PC-9 (cell line): ENCODE measurements at regions of chr1 and their contacts with region 1.

Region 1: GRCh38 chr1:67748630-67749029 is 63.6 kb downstream of the GADD45A start:
- DNase-seq: peak in 1 of 2 experiments; percentile 57
- H3K4me3 ChIP-seq: peak overlapping the region; percentile 42; the same call in 1 of the 2 replicates
- H3K27ac ChIP-seq: peak overlapping the region; percentile 91
- H3K4me1 ChIP-seq: peaks cover 58% of the 10 kb centered on the region
- H3K27me3 ChIP-seq: no peaks in the 10 kb centered on the region
- CTCF ChIP-seq: no peak

Region 2: DNA sequence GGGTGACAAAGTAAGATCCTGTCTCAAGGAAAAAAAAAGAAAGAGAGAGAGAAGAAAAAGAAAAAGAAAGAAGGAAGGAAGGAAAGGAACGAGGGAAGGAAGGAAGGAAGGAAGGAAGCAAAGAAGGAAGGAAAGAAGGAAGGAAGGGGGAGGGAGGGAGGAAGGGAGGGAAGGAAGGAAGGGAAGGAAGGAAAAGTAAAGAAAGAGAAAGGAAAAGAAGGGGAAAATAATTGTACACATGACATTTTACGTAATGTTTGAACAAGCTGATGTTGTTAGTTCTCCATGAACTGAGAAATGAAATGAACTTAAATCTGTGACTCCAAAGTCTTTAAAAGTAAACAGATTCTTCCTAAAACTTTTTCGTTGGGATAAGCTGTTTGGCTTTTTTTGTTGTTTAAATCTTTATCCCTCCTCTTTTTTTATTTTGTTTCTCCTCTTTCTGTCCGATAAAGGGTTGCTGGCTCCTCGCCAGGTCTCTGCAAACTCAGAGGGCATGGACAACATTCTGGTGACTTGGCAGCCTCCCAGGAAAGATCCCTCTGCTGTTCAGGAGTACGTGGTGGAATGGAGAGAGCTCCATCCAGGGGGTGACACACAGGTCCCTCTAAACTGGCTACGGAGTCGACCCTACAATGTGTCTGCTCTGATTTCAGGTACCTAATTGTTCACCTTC is 381.1 kb before region 1 on chr1:
- CTCF ChIA-PET with region 1: no interaction called
- POLR2A ChIA-PET with region 1: no interaction called
- intact Hi-C with region 1: loop called (anchors 10 kb)
- DNase-seq: peak in 1 of 2 experiments; percentile 39
- H3K4me3 ChIP-seq: no peak overlapping the region
- H3K27ac ChIP-seq: no peak overlapping the region
- H3K4me1 ChIP-seq: peaks cover 13% of the 10 kb centered on the region
- H3K27me3 ChIP-seq: no peaks in the 10 kb centered on the region
- CTCF ChIP-seq: no peak

Region 3: DNA sequence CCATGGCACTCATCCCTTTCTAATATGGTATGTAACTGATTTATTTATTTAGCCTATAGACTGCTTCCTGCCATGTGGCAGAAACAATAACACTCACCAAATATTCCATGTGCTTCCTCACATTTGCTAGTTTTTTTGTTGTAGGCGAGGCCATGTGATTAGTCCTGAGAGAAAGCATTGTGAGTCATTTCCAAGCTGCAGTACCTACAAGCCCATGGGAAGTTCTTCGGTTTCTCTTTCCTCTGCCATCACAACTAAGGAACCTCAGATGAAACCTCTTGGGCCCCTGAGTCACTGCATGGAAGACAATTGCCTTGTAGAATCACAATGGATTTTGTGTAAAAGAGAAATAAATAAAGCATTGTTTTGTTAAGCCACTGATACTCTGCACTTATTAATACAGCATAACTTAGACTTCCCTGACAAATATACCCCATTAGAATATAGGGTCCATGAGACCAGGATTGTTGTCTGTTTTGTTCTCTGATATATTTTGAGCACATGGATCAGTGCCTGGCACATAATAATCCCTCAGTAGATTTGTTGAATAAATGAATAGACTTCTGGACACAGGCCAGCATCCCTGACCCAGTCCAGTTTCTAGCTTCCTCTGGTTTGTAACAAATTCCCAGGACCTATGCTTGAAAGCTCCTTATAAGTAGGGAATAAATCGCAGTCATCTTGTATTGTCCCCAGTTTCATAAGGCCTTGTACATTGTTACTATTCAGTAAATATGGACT is 122.0 kb before region 1 on chr1:
- CTCF ChIA-PET with region 1: no interaction called
- POLR2A ChIA-PET with region 1: no interaction called
- intact Hi-C with region 1: no loop called
- DNase-seq: peak; percentile 22 to 93
- H3K4me3 ChIP-seq: no peak overlapping the region
- H3K27ac ChIP-seq: peak overlapping the region; percentile 87
- H3K4me1 ChIP-seq: peaks cover 40% of the 10 kb centered on the region
- H3K27me3 ChIP-seq: no peaks in the 10 kb centered on the region
- CTCF ChIP-seq: no peak

Region 4: GRCh38 chr1:67700692-67701410 is 47.8 kb before region 1 on chr1:
- CTCF ChIA-PET with region 1: interaction called, 7 read pairs
- POLR2A ChIA-PET with region 1: interaction called, 7 read pairs
- intact Hi-C with region 1: loop called (anchors 2 kb)
- DNase-seq: peak; percentile 84 to 93
- H3K4me3 ChIP-seq: no peak overlapping the region
- H3K27ac ChIP-seq: peak overlapping the region; percentile 63
- H3K4me1 ChIP-seq: peaks cover 18% of the 10 kb centered on the region
- H3K27me3 ChIP-seq: no peaks in the 10 kb centered on the region
- CTCF ChIP-seq: peak; percentile 55; the same call in 1 of the 2 replicates

Region 5: GRCh38 chr1:67713057-67713846 is 35.4 kb before region 1 on chr1:
- CTCF ChIA-PET with region 1: no interaction called
- POLR2A ChIA-PET with region 1: no interaction called
- intact Hi-C with region 1: loop called (anchors 2 kb)
- DNase-seq: peak; percentile 70 to 92
- H3K4me3 ChIP-seq: no peak overlapping the region
- H3K27ac ChIP-seq: peak overlapping the region; percentile 70
- H3K4me1 ChIP-seq: peaks cover 44% of the 10 kb centered on the region
- H3K27me3 ChIP-seq: no peaks in the 10 kb centered on the region
- CTCF ChIP-seq: no peak

Region 6: DNA sequence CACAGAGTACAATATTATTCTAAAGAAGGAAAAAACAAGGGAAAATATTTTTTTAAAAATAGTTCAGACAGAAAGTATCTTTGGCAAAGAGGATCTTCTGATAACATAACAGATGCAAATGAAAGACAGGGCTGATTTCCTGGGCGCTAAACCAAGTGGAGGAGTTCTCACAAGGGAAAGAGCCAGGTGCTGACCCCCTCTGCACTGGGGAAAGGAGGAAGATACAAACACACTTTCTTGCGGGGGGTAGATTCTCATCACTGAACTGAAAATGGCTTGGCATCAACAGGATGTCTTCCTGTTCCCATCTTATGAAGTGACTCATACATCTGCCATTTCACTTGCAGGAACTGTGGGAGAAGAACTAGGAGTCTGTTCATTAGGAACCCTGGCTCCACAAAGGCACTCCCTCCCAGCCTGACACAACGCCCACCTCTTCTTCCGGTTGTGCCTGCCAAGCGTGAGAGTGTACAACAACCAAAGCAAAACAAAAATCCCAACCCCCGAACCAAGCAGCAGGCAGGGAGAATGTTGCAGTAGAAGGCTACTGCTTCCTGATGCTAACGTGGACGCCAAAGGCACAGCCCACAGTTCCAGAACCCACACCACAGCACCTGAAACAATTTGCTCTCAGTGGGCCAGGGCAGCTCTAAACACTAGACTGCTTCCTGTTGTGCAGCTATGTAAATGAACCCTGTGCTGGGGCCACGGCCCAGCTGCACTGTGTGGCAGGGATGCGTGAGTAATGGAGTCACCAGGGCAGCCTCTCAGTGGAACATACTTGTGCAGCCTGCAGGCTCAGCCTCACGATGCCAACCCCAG is 12.6 kb before region 1 on chr1:
- CTCF ChIA-PET with region 1: interaction called, 3 read pairs
- POLR2A ChIA-PET with region 1: interaction called, 14 read pairs
- intact Hi-C with region 1: loop called (anchors 1 kb)
- DNase-seq: peak; percentile 71 to 78
- H3K4me3 ChIP-seq: no peak overlapping the region
- H3K27ac ChIP-seq: peak overlapping the region; percentile 22; the same call in 1 of the 2 replicates
- H3K4me1 ChIP-seq: peaks cover 9% of the 10 kb centered on the region
- H3K27me3 ChIP-seq: no peaks in the 10 kb centered on the region
- CTCF ChIP-seq: no peak